ENCODE measurements at regions of chr20 and their contacts with region 1.

Region 1: DNA sequence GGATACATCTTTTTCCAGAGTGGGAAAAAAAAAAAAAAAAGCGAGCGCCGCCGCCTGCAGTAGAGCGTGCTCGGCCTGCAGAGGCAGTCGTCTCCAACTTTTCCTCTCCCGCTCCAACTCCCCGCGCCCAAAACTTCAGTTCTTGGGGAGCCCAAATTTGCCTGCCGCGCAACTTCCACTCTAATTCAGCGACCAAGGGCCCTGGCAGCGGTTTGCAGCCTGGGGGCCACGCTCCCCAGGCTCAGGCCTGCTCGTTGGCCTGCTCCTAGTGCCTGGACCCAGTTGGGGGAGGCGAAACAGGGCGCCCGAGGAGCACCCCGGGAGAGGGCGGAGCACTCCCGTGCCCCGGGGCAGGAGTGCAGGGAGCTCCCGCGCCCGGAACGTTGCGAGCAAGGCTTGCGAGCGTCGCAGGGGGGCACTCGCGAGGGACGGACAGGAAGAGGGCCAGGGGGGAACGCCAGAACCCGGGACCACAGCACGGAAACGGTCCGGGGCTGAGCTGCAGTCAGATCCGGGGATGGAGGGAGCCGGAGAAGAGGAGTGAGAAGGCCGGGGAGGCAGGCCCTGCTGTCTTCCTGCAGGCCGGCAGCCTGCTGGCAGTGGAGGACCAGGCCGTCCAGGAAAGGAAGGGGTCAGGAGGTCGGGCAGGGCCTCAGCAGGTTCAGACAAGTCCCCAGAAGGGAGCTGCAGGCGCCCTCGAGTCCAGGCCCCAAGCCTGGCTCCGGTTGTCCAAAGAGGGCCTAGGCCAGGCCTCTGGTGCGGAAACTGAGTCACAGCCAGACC is at the start of gene STX16:
- DNase-seq: peak; percentile 95
- H3K4me3 ChIP-seq: peak within 1 kb of the TSS; percentile 71 to 91 (median 85)
- H3K27ac ChIP-seq: peak within 1 kb of the TSS; percentile 93 to 96 (median 96)
- H3K4me1 ChIP-seq: peaks cover 0 to 74% (median 60%) of the 10 kb centered on the region in 4 donors
- H3K27me3 ChIP-seq: no peaks in the 10 kb centered on the region
- CTCF ChIP-seq: peak; percentile 40 to 65 (median 60)
- EP300 ChIP-seq: no peak
- POLR2A ChIP-seq: peak; percentile 63 to 66
- total RNA-seq, gene STX16: 42.8 to 126 (median 57.1) TPM

Region 2: GRCh38 chr20:57061058-57061900 is 1589.7 kb before region 1 on chr20:
- intact Hi-C with region 1: no loop called
- DNase-seq: peak; percentile 73
- H3K4me3 ChIP-seq: no peak overlapping the region
- H3K27ac ChIP-seq: no peak overlapping the region
- H3K4me1 ChIP-seq: peaks cover 0 to 9% (median 0%) of the 10 kb centered on the region in 4 donors
- H3K27me3 ChIP-seq: peaks cover 0 to 26% (median 5%) of the 10 kb centered on the region in 3 donors
- CTCF ChIP-seq: peak in 1 of 4 experiments; percentile 49
- EP300 ChIP-seq: no peak
- POLR2A ChIP-seq: no peak

Region 3: DNA sequence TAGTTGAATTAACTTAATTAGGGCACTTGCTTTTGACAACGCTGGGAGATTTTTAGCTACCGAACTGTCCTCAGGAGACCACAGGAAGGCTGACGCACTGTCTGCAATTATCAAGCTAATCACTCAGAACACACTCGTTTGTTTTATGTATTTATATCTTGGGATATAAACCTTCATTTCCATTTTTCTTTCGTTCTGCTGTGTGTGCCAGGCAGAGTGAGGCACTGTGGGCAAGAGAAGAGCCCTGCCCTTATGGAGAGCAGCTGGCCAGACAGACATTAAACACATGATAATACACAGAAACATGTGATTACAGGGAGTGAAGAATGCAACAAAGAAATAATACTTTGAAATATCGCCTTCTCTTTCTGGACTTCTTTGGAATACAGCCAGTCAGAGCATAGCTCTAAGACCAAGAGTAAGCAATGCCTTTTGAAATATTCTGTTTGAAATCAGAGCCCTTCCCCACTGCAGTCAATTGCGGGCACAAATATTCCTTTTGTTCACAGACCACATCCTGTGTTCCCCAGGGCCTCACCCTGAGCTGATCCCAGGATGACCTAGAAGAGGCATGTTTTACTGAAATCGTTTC is 519.3 kb before region 1 on chr20:
- intact Hi-C with region 1: no loop called
- DNase-seq: peak; percentile 44
- H3K4me3 ChIP-seq: no peak overlapping the region
- H3K27ac ChIP-seq: peak overlapping the region; percentile 32 to 58 (median 46)
- H3K4me1 ChIP-seq: peaks cover 0 to 17% (median 8%) of the 10 kb centered on the region in 4 donors
- H3K27me3 ChIP-seq: peaks cover 0 to 19% (median 6%) of the 10 kb centered on the region in 3 donors
- CTCF ChIP-seq: no peak
- EP300 ChIP-seq: no peak
- POLR2A ChIP-seq: no peak

Region 4: DNA sequence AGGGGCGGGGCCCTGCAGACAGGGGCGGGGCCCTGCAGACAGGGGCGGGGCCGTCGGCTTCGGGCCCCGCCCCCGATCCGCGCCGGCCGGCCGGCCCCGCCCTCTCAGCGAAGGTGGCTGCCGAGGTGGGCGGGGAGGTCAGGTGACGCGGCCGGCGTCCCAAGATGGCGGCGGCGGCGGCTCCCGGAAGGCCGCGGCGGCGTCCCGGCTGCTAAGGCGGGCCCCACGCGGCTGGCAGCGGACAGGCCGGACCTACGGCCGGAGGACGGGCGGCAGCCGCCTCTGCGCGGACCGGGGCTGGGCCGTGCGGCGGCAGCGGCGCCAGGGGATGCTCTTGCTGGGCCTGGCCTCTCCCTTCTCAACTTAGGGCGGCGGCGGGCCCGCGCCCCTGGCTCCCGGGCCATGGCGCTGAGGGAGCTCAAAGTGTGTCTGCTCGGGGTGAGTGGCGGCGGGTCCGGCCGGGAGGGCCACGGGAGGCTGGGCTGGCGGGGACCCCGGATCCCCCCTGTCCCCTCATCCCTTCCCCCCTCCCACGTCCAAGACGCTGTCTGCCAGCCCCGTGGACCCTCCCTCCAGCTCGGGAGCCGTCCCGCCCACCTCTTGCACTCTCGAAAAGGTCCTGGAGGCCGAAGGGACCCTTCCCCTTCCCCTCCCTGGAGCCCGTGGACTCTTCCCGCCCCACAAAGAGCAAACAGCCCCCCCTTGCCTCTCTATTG is 341.2 kb before region 1 on chr20 and contains the start of gene RAB22A:
- intact Hi-C with region 1: loop called (anchors 2 kb)
- DNase-seq: peak; percentile 92
- H3K4me3 ChIP-seq: peak within 1 kb of the TSS; percentile 60 to 99 (median 80)
- H3K27ac ChIP-seq: peak within 1 kb of the TSS; percentile 79 to 90 (median 84)
- H3K4me1 ChIP-seq: peaks cover 0 to 42% (median 28%) of the 10 kb centered on the region in 4 donors
- H3K27me3 ChIP-seq: no peaks in the 10 kb centered on the region
- CTCF ChIP-seq: no peak
- EP300 ChIP-seq: no peak
- POLR2A ChIP-seq: no peak
- total RNA-seq, gene RAB22A: 17.6 to 21.6 (median 21.0) TPM

Region 5: DNA sequence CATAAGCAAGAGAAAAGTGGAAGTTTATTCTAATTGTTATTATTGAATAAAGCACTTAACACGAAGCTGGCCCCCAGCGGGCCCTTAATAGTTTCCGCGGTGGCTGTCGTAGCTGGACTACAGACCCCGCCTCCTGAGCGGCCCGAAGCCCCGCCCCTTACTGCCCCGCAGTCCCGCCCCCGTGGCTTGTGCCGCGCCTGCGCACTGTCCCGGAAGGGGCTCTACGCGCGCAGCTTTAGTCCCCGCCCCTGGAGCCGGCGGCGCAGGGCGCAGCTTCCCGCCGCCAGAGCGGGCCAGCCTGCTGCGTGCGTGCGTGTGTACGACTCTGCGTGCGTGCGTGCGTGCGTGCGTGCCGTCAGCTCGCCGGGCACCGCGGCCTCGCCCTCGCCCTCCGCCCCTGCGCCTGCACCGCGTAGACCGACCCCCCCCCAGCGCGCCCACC is 262.1 kb before region 1 on chr20 and contains the start of gene VAPB:
- intact Hi-C with region 1: loop called (anchors 5 kb)
- DNase-seq: peak; percentile 98
- H3K4me3 ChIP-seq: peak within 1 kb of the TSS; percentile 76 to 91 (median 86)
- H3K27ac ChIP-seq: peak within 1 kb of the TSS; percentile 89 to 96 (median 94)
- H3K4me1 ChIP-seq: peaks cover 0 to 38% (median 36%) of the 10 kb centered on the region in 4 donors
- H3K27me3 ChIP-seq: no peaks in the 10 kb centered on the region
- CTCF ChIP-seq: no peak
- EP300 ChIP-seq: peak in 1 of 4 donors; percentile 62
- POLR2A ChIP-seq: no peak
- total RNA-seq, gene VAPB: 23.4 to 42.1 (median 32.7) TPM

Region 6: DNA sequence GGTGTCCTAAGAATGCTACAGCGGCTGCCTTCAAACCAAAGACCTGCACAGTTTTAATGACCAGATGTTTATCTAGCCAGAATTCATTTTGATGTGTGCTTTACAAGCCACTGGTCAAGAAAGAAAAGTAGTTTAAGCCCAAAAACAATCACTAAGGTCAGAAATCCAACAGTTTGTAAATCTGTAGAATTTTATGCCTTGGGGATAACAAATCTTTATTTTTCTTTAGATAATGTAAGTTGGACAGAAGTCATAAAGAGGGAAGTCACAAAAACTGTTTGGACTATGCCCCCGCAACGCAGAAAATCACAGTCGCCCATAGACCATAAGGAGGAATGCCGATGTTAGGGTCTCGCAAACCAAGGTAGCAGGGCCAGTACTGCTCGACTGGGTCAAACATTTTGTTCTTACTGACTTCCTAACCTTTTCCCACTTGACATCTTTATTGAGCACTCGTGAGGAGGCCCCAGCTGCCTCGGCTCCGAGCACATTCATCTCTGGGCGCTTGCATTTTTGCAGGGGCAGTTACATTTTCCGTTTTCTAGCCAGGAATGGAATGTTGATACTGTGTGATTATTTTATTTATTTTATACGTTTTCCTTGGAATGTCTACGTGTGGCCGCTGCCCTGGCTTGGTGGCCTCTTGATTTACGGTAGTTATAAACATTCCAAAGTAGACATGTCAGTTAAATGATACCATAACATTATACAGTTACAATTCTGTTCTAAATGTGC is 79.1 kb before region 1 on chr20:
- intact Hi-C with region 1: loop called (anchors 5 kb)
- DNase-seq: peak; percentile 76
- H3K4me3 ChIP-seq: no peak overlapping the region
- H3K27ac ChIP-seq: peak overlapping the region; percentile 31 to 88 (median 79)
- H3K4me1 ChIP-seq: peaks cover 2 to 59% (median 51%) of the 10 kb centered on the region in 4 donors
- H3K27me3 ChIP-seq: no peaks in the 10 kb centered on the region
- CTCF ChIP-seq: no peak
- EP300 ChIP-seq: peak in 3 of 4 donors; percentile 33 to 73 (median 52)
- POLR2A ChIP-seq: no peak

Region 7: DNA sequence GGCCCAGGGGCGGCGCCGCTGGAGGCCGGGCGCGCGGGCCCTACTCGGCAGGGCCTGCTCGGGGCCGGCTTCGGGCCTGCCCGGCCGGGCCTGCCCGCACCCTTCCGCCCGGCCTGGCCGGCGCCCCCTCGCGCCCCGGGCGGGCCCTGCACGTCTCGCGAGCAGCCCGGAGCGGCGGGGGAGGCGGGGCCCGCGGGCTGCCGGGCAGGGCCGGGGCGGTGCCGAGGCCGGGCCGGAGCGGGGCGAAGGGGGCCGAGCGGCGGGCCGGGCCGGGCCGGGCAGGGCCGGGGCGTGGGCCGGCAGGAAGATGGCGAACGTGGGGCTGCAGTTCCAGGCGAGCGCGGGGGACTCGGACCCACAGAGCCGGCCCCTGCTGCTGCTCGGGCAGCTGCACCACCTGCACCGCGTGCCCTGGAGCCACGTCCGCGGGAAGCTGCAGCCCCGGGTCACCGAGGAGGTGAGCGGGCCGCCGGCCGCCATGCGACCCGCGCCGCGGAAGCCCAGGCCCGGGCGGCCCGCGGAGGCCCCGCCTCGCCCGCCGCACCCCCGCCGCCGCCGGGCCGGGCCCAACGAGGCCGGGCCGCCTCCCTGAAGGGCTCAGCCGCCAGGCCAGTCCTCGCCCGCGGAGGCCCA is 41.7 kb after region 1 on chr20 and contains the start of gene NPEPL1:
- intact Hi-C with region 1: loop called (anchors 1 kb)
- DNase-seq: peak; percentile 76
- H3K4me3 ChIP-seq: peak within 1 kb of the TSS; percentile 30 to 56 (median 55)
- H3K27ac ChIP-seq: peak within 1 kb of the TSS; percentile 90 to 96 (median 94)
- H3K4me1 ChIP-seq: peaks cover 0 to 53% (median 50%) of the 10 kb centered on the region in 4 donors
- H3K27me3 ChIP-seq: no peaks in the 10 kb centered on the region
- CTCF ChIP-seq: no peak
- EP300 ChIP-seq: no peak
- POLR2A ChIP-seq: no peak
- total RNA-seq, gene NPEPL1: 22.9 to 65.1 (median 46.0) TPM